CD4-positive, alpha-beta memory T cell (primary cell): ENCODE measurements at regions of chr6 and their contacts with region 1.

Region 1: GRCh38 chr6:139375232-139376016 is 976 bp upstream of the CITED2 start:
- DNase-seq: peak; percentile 87 to 95 (median 91)
- H3K4me3 ChIP-seq: peak overlapping the region; percentile 52 to 98
- H3K4me3 Mint-ChIP-seq: peak overlapping the region; percentile 93 to 100 (median 98)
- H3K27ac ChIP-seq: peak overlapping the region; percentile 82
- H3K27ac Mint-ChIP-seq: peak overlapping the region; percentile 96 to 99 (median 96)
- H3K4me1 ChIP-seq: peaks cover 26% of the 10 kb centered on the region
- H3K4me1 Mint-ChIP-seq: peaks cover 18 to 44% (median 26%) of the 10 kb centered on the region in 4 donors
- H3K27me3 ChIP-seq: no peaks in the 10 kb centered on the region
- H3K27me3 Mint-ChIP-seq: no peaks in the 10 kb centered on the region

Region 2: GRCh38 chr6:138455746-138456400 is 919.6 kb before region 1 on chr6:
- CTCF ChIA-PET with region 1: interaction called, 3 read pairs
- POLR2A ChIA-PET with region 1: interaction called, 17 read pairs
- intact Hi-C with region 1: no loop called
- DNase-seq: peak; percentile 57 to 81 (median 74)
- H3K4me3 ChIP-seq: peak overlapping the region; percentile 12 to 47
- H3K4me3 Mint-ChIP-seq: peak overlapping the region; percentile 57 to 87 (median 72)
- H3K27ac ChIP-seq: peak overlapping the region; percentile 41
- H3K27ac Mint-ChIP-seq: peak overlapping the region; percentile 85 to 96 (median 89)
- H3K4me1 ChIP-seq: peaks cover 26% of the 10 kb centered on the region
- H3K4me1 Mint-ChIP-seq: peaks cover 13 to 37% (median 24%) of the 10 kb centered on the region in 4 donors
- H3K27me3 ChIP-seq: no peaks in the 10 kb centered on the region
- H3K27me3 Mint-ChIP-seq: no peaks in the 10 kb centered on the region

Region 3: GRCh38 chr6:138666636-138667035 is 708.8 kb before region 1 on chr6:
- CTCF ChIA-PET with region 1: no interaction called
- POLR2A ChIA-PET with region 1: no interaction called
- intact Hi-C with region 1: no loop called
- DNase-seq: no peak
- H3K4me3 ChIP-seq: no peak overlapping the region
- H3K4me3 Mint-ChIP-seq: no peak overlapping the region
- H3K27ac ChIP-seq: no peak overlapping the region
- H3K27ac Mint-ChIP-seq: no peak overlapping the region
- H3K4me1 ChIP-seq: no peaks in the 10 kb centered on the region
- H3K4me1 Mint-ChIP-seq: no peaks in the 10 kb centered on the region
- H3K27me3 ChIP-seq: no peaks in the 10 kb centered on the region
- H3K27me3 Mint-ChIP-seq: peaks cover 3 to 5% of the 10 kb centered on the region in 2 donors

Region 4: GRCh38 chr6:139109558-139109957 is 265.9 kb before region 1 on chr6:
- CTCF ChIA-PET with region 1: interaction called, 13 read pairs
- POLR2A ChIA-PET with region 1: interaction called, 59 read pairs
- intact Hi-C with region 1: no loop called
- DNase-seq: peak in 4 of 5 donors; percentile 11 to 30 (median 21)
- H3K4me3 ChIP-seq: no peak overlapping the region
- H3K4me3 Mint-ChIP-seq: peak overlapping the region in 2 of 8 donors; percentile 13 to 39
- H3K27ac ChIP-seq: no peak overlapping the region
- H3K27ac Mint-ChIP-seq: peak overlapping the region; percentile 3 to 87 (median 44)
- H3K4me1 ChIP-seq: peaks cover 50% of the 10 kb centered on the region
- H3K4me1 Mint-ChIP-seq: peaks cover 38 to 59% (median 51%) of the 10 kb centered on the region in 4 donors
- H3K27me3 ChIP-seq: no peaks in the 10 kb centered on the region
- H3K27me3 Mint-ChIP-seq: no peaks in the 10 kb centered on the region

Region 5: DNA sequence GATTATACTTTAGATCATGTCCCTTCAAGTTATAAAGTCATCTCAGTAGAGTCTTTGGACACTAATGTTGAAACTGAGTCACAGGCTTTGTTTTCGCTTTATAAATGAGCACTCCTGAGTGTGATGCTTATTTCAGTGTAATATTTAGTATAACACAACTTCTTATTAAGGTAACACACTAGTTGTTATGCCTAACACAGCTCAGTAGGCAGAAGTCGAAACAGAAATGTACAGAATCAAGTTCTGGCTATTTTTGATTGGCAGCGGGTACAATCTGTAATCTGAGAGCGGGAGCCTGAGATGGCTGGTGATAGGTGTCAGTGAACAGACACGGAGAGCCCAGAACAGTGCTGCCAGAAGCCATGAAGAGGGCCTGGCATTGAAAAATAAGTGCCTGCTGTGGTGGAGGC is 229.1 kb before region 1 on chr6:
- CTCF ChIA-PET with region 1: interaction called, 7 read pairs
- POLR2A ChIA-PET with region 1: interaction called, 18 read pairs
- intact Hi-C with region 1: no loop called
- DNase-seq: no peak
- H3K4me3 ChIP-seq: peak overlapping the region; percentile 39 to 40
- H3K4me3 Mint-ChIP-seq: peak overlapping the region; percentile 66 to 90 (median 82)
- H3K27ac ChIP-seq: peak overlapping the region; percentile 50
- H3K27ac Mint-ChIP-seq: peak overlapping the region; percentile 69 to 92 (median 86)
- H3K4me1 ChIP-seq: peaks cover 97% of the 10 kb centered on the region
- H3K4me1 Mint-ChIP-seq: peaks cover 80 to 94% (median 87%) of the 10 kb centered on the region in 4 donors
- H3K27me3 ChIP-seq: no peaks in the 10 kb centered on the region
- H3K27me3 Mint-ChIP-seq: no peaks in the 10 kb centered on the region

Region 6: DNA sequence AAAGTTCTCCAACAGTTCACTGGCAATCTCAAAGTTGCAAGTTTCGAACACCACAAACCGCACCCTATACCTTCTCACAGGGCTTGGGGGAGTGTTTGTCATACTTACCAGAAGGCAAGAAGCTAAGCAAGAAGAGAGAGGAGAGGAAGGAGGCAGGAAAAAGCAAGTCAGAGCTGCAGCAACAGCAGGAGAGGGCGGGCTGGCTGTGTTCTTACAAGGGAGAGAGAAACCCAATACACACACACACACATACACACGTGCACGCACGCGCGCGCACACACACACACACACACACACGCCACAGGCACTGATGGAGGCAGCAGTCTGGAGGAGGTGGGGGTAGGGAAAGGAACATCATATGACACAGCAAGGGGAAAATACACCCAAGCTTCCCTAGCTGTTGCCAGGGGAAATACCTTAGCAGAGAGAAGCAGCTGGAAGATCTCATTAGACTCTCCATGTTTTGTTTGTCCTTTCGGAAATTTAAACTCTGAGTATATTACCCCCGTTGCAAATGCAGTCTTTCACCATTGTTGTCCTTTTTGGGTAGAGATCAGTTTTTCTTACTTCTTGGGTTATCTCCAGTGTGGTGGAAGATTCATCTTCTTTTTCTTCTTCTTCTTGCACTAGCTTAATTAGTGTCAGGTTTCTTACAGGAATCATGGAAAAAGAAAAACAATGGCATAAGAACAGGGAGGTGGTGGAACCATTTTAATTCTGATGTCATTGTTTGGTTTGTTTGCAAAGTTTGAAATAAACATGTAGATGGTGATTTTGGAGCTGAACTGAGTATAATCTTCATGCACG is 83.4 kb before region 1 on chr6 and contains the start of gene TXLNB:
- CTCF ChIA-PET with region 1: interaction called, 14 read pairs
- POLR2A ChIA-PET with region 1: interaction called, 107 read pairs
- intact Hi-C with region 1: no loop called
- DNase-seq: peak; percentile 81 to 95 (median 89)
- H3K4me3 ChIP-seq: peak within 1 kb of the TSS; percentile 26 to 42
- H3K4me3 Mint-ChIP-seq: peak within 1 kb of the TSS; percentile 79 to 91 (median 85)
- H3K27ac ChIP-seq: peak within 1 kb of the TSS; percentile 59
- H3K27ac Mint-ChIP-seq: peak within 1 kb of the TSS; percentile 94 to 99 (median 97)
- H3K4me1 ChIP-seq: peaks cover 59% of the 10 kb centered on the region
- H3K4me1 Mint-ChIP-seq: peaks cover 44 to 76% (median 58%) of the 10 kb centered on the region in 4 donors
- H3K27me3 ChIP-seq: no peaks in the 10 kb centered on the region
- H3K27me3 Mint-ChIP-seq: no peaks in the 10 kb centered on the region
- total RNA-seq, gene TXLNB: 1.4 to 1.6 TPM

Region 7: DNA sequence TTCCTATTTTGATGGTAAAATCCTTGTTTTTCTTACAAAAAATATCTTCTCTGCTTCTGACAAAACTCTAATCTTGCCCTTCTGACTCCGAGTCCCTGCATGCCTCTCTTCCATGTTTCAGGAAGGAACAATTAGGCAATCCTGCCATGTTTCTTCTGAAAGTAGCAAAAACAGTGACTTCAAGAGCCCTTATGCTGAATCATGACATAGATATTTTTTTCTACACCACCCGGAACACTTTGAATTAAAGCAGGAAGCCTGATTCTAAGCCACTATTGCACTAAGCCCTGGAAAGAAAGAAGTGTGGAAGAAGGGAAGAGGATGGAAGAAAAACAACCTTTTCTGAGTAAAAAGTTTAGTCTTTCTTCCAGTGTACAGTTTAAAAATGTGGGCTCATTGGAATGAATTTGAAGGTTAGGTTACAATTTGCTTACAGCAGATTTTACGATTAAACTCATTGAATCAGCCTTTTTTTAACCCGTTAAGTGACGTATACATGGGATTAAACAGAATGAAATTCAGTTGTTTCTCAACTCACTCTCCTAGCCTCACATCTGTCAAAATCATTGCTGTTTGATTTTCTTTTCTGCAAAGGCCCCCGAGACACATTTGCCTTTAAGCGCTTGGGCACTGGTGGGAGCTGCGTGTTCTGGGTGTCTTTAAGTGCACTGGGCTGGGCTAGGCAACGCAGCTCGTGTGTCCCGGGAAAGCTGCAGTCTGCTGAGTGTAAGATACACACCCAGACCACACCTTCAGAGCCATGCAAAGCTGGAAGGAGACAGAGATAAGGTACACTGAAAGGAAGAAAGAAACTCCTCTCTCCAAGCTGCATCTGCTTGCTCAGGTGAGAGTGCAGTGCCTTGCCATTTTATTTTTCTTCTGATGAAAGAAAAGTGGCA is 158.4 kb after region 1 on chr6:
- CTCF ChIA-PET with region 1: interaction called, 21 read pairs
- POLR2A ChIA-PET with region 1: interaction called, 153 read pairs
- intact Hi-C with region 1: loop called (anchors 2 kb)
- DNase-seq: peak in 2 of 5 donors; percentile 6 to 10
- H3K4me3 ChIP-seq: no peak overlapping the region
- H3K4me3 Mint-ChIP-seq: peak overlapping the region; percentile 28 to 93 (median 76)
- H3K27ac ChIP-seq: peak overlapping the region; percentile 39
- H3K27ac Mint-ChIP-seq: peak overlapping the region; percentile 83 to 96 (median 92)
- H3K4me1 ChIP-seq: peaks cover 84% of the 10 kb centered on the region
- H3K4me1 Mint-ChIP-seq: peaks cover 47 to 76% (median 59%) of the 10 kb centered on the region in 4 donors
- H3K27me3 ChIP-seq: no peaks in the 10 kb centered on the region
- H3K27me3 Mint-ChIP-seq: no peaks in the 10 kb centered on the region

Region 8: GRCh38 chr6:139927236-139927635 is 551.8 kb after region 1 on chr6:
- CTCF ChIA-PET with region 1: interaction called, 6 read pairs
- POLR2A ChIA-PET with region 1: interaction called, 3 read pairs
- intact Hi-C with region 1: loop called (anchors 1 kb)
- DNase-seq: peak in 1 of 5 donors; percentile 3
- H3K4me3 ChIP-seq: no peak overlapping the region
- H3K4me3 Mint-ChIP-seq: no peak overlapping the region
- H3K27ac ChIP-seq: no peak overlapping the region
- H3K27ac Mint-ChIP-seq: no peak overlapping the region
- H3K4me1 ChIP-seq: no peaks in the 10 kb centered on the region
- H3K4me1 Mint-ChIP-seq: no peaks in the 10 kb centered on the region
- H3K27me3 ChIP-seq: no peaks in the 10 kb centered on the region
- H3K27me3 Mint-ChIP-seq: peaks cover 2 to 12% of the 10 kb centered on the region in 2 donors